HepG2 (cell line): ENCODE measurements at regions of chr1 and their contacts with region 1.

Region 1: GRCh38 chr1:86687595-86687994 is 16.8 kb upstream of the SH3GLB1 start:
- DNase-seq: no peak
- ATAC-seq: no peak
- H3K4me3 ChIP-seq: no peak overlapping the region
- H3K27ac ChIP-seq: no peak overlapping the region
- H3K4me1 ChIP-seq: no peaks in the 10 kb centered on the region
- H3K27me3 ChIP-seq: no peaks in the 10 kb centered on the region; a peak in 2 of 5 replicates
- CTCF ChIP-seq: no peak
- EP300 ChIP-seq: no peak
- POLR2A ChIP-seq: no peak
- RAD21 ChIP-seq: no peak

Region 2: DNA sequence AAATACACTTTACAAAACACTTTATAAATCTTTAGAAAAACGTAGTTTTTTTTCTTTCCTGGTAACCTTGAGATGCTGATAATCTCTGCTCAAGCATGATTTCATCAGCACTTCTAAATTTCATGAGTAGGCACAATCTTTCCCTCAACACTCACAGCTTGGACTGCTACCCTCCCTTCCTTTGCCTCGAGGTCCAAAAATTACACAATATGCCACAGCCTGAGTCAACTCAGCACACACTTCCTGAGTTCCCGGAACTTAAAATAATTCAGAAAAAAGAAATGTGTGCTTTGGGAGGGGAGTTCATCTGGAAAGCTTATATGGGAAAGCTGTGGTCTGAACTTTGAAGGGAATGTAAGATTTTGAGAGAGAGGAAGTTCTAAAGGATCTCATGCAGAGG is 257.8 kb before region 1 on chr1:
- CTCF ChIA-PET with region 1: no interaction called
- POLR2A ChIA-PET with region 1: no interaction called
- in situ Hi-C with region 1: no loop called
- intact Hi-C with region 1: no loop called
- DNase-seq: no peak
- ATAC-seq: no peak; the same call in 2 of the 3 replicates
- H3K4me3 ChIP-seq: no peak overlapping the region
- H3K27ac ChIP-seq: no peak overlapping the region
- H3K4me1 ChIP-seq: no peaks in the 10 kb centered on the region
- H3K27me3 ChIP-seq: no peaks in the 10 kb centered on the region; a peak in 1 of 5 replicates
- CTCF ChIP-seq: no peak
- EP300 ChIP-seq: no peak
- POLR2A ChIP-seq: no peak
- RAD21 ChIP-seq: no peak

Region 3: DNA sequence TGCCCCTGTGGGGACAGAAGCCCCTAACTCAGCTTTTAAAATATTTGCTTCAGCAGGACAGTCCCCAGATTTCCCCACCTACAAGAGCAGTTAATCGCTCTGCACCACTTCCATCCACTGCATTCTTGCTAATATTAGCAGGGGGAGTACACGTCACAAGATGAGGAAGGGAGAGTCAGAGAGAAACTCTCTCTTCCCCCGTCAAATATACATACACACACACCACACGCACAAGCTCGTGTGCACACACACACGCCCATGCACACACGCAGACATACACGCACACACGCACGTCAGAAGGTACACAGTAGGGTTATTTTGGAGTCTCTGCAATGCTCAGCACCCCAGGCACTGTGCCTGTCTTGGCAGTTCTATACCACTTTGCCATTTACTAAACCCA is 216.7 kb before region 1 on chr1:
- CTCF ChIA-PET with region 1: no interaction called
- POLR2A ChIA-PET with region 1: no interaction called
- in situ Hi-C with region 1: no loop called
- intact Hi-C with region 1: loop called (anchors 5 kb)
- DNase-seq: no peak
- ATAC-seq: no peak
- H3K4me3 ChIP-seq: no peak overlapping the region
- H3K27ac ChIP-seq: no peak overlapping the region
- H3K4me1 ChIP-seq: no peaks in the 10 kb centered on the region
- H3K27me3 ChIP-seq: no peaks in the 10 kb centered on the region; a peak in 1 of 5 replicates
- CTCF ChIP-seq: no peak
- EP300 ChIP-seq: no peak
- POLR2A ChIP-seq: no peak
- RAD21 ChIP-seq: no peak

Region 4: DNA sequence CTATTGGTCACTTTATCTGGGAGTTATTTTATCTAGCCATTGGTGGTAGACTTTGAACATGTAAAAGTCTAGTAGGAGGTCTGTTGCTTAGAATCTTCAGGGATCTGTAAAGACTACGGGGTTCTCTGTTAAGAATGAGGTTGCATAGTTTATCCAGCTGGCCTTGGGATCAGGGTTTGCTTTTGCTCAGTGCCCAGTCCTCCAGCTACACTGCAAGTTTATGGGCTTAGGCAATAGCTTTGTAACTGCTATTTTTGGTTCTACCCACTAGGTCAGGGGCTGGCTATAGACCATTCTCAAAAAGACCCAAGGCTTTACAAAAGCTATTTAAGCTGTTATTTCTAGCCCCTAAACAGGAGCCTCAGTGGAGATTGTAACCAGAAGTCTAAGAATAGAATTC is 26.6 kb after region 1 on chr1:
- CTCF ChIA-PET with region 1: no interaction called
- POLR2A ChIA-PET with region 1: no interaction called
- in situ Hi-C with region 1: no loop called
- intact Hi-C with region 1: no loop called
- DNase-seq: peak; percentile 7
- ATAC-seq: peak; percentile 72; the same call in 2 of the 3 replicates
- H3K4me3 ChIP-seq: no peak overlapping the region
- H3K27ac ChIP-seq: no peak overlapping the region
- H3K4me1 ChIP-seq: peaks cover 29% of the 10 kb centered on the region
- H3K27me3 ChIP-seq: no peaks in the 10 kb centered on the region
- CTCF ChIP-seq: no peak
- EP300 ChIP-seq: no peak
- POLR2A ChIP-seq: no peak
- RAD21 ChIP-seq: no peak